ENCODE measurements at regions of chr16 and their contacts with region 1.

Region 1: GRCh38 chr16:67806428-67807147 is at the starts of genes RANBP10 and TSNAXIP1:
- DNase-seq: peak; percentile 95
- ATAC-seq: peak; percentile 94
- H3K4me3 Mint-ChIP-seq: peak within 1 kb of the TSS; percentile 93
- H3K27ac Mint-ChIP-seq: peak within 1 kb of the TSS; percentile 87
- H3K4me1 Mint-ChIP-seq: peaks cover 38% of the 10 kb centered on the region
- H3K27me3 Mint-ChIP-seq: no peaks in the 10 kb centered on the region
- total RNA-seq, gene RANBP10: 23.1 to 23.2 TPM
- total RNA-seq, gene TSNAXIP1: 0.40 TPM in 1 of 2 experiments, not detected in the other

Region 2: DNA sequence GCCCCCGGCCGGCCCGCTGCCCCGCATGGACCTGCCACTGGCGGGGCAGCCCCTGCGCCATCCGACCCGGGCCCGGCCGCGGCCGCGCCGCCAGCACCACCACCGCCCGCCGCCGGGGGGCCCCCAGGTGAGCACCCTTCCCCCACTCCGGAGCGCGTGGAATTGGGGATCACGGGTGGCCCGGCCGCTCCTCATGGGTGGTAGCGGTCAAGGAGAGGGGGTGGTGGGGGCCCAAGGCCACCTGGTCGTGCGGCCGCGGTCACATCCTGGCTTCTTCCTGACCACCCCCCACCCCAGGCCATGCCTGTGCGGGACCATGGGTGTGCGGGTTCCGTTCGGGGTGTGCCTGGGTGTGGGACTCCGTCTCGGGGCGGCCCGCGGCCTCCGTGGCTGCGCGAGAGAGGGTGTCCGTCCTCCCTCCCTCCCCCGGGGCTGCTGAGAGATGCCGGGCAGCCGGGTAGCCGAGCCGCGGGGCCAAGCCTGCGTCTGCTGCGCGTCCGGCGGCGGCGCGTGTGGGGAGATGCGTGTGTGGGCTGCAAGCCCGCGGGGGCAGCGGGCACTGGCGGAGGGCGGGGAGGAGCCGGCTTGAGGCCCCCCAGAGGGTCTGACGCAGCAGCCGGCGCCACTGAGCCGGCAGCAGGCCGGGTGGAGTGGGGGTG is 153.3 kb before region 1 on chr16:
- POLR2A ChIA-PET with region 1: no interaction called
- DNase-seq: no peak
- ATAC-seq: no peak
- H3K4me3 Mint-ChIP-seq: no peak overlapping the region
- H3K27ac Mint-ChIP-seq: no peak overlapping the region
- H3K4me1 Mint-ChIP-seq: peaks cover 7% of the 10 kb centered on the region
- H3K27me3 Mint-ChIP-seq: no peaks in the 10 kb centered on the region

Region 3: DNA sequence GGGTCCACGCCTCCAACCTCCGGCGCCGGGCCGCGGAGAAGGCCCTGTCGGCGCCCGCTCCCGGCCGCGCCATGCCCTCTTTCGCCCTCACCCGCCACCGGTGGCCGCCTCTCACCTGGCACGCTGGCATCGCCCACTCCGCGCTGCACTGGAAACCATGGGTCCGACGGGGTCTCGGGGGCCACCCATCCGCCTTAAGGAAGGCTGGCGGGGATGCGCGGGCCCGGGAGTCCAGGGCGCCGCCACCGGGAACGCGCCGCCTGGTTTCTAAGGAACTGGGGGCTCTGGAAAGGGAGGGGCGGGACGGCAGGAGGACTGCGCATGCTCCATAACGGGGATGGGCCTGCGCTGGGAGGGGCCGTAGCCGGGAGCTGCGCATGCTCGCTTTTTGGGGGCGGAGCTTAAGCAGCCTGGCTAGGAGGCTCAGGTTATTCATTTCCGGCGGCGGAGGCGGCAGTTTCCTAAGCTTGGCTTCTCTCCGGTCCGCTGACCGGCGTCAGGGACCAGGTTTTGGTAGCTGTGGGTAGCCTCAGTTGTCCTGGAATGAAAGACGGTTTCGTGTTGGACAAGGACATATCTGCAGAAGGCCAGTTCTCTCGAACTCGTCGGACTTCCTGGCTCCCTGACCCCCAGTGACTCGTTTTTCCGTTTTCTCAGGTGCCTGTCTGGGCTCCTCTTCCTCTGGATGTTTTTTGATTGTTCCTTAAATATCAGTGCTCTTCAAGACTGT is 87.4 kb before region 1 on chr16 and contains the start of gene GFOD2:
- POLR2A ChIA-PET with region 1: interaction called, 21 read pairs
- DNase-seq: peak; percentile 99
- ATAC-seq: peak; percentile 97
- H3K4me3 Mint-ChIP-seq: peak within 1 kb of the TSS; percentile 94
- H3K27ac Mint-ChIP-seq: peak within 1 kb of the TSS; percentile 97
- H3K4me1 Mint-ChIP-seq: peaks cover 35% of the 10 kb centered on the region
- H3K27me3 Mint-ChIP-seq: no peaks in the 10 kb centered on the region
- total RNA-seq, gene GFOD2: 12.5 to 14.2 TPM

Region 4: DNA sequence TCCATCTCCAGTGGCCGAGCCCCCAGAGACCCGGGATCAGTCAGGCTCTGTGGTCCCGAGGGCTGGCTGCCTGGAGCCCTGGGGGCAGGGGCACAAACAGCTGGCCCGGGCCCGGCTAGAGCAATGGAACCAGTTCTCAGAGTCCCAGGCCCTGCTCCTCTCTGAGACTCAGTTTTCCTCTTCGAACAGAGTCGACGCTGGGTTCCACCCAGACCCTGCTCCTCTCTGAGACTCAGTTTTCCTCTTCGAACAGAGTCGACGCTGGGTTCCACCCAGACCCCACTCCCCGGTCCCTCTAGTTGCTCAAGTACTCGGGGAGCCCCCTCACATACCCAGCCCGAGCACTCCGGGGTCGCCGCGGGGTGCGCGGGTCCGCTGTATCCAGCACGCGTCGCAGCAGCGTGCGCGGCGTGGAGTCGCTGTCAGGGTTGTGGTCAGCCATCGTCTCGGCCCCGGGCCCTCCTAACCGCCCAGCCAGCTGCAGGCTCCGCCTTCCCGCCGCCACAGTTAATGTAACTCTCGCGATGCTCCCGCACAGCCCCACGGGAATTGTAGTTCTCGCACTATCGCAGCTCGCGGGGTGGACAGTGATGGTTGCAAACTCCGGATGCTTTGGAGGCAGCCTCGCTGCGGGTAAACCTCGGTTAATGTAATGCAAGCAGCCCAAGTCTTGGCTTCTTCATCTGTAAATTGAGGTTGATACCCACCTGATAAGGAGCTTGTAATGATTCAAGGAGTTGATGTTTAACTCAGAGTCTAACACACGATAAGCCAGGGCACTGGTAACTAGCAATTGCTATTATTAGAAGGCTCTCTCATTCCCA is 27.0 kb after region 1 on chr16:
- POLR2A ChIA-PET with region 1: interaction called, 16 read pairs
- DNase-seq: peak; percentile 94
- ATAC-seq: peak; percentile 98
- H3K4me3 Mint-ChIP-seq: peak overlapping the region; percentile 89
- H3K27ac Mint-ChIP-seq: peak overlapping the region; percentile 85
- H3K4me1 Mint-ChIP-seq: peaks cover 14% of the 10 kb centered on the region
- H3K27me3 Mint-ChIP-seq: no peaks in the 10 kb centered on the region

Measured in activated naive CD8-positive, alpha-beta T cell treated with anti-CD3 and anti-CD28 coated beads, Interleukin-2, amount 10 ng/mL, durations not matched to agents 7 days and 5 days (primary cell).